Activated CD4-positive, alpha-beta T cell treated with anti-CD3 and anti-CD28 coated beads, Interleukin-2, amount 10 ng/mL, durations not matched to agents 7 days and 5 days (primary cell): ENCODE measurements at regions of chr3 and their contacts with region 1.

Region 1: DNA sequence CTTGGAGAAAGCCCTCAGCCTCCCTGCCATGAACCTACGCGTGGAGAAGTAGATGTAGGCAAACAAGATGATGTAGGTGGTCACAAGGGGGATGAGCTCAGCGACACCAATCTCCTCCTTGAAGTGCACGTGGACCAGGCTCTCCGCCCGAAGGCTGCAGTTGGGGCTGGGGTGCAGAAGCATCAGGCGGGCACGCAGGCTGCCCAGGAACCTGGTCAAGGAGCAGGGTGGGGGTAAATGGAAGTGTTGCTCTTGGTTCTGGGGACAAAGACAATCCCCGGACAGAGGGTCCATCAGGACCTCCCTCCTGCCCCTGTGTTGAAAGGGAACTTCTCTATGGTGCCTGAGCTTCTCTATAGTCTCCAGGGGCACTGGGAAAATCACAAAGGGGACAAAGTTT is 45.1 kb downstream of the PTPN23 start:
- DNase-seq: no peak
- H3K4me3 Mint-ChIP-seq: no peak overlapping the region
- H3K27ac Mint-ChIP-seq: no peak overlapping the region
- H3K4me1 Mint-ChIP-seq: peaks cover 14% of the 10 kb centered on the region
- H3K27me3 Mint-ChIP-seq: no peaks in the 10 kb centered on the region

Region 2: GRCh38 chr3:46921041-46921440 is 504.9 kb before region 1 on chr3:
- CTCF ChIA-PET with region 1: no interaction called
- POLR2A ChIA-PET with region 1: interaction called, 11 read pairs
- DNase-seq: no peak
- H3K4me3 Mint-ChIP-seq: no peak overlapping the region
- H3K27ac Mint-ChIP-seq: no peak overlapping the region
- H3K4me1 Mint-ChIP-seq: peaks cover 16% of the 10 kb centered on the region
- H3K27me3 Mint-ChIP-seq: no peaks in the 10 kb centered on the region